CD4-positive, alpha-beta T cell (primary cell): ENCODE measurements at regions of chr14 and their contacts with region 1.

Region 1: DNA sequence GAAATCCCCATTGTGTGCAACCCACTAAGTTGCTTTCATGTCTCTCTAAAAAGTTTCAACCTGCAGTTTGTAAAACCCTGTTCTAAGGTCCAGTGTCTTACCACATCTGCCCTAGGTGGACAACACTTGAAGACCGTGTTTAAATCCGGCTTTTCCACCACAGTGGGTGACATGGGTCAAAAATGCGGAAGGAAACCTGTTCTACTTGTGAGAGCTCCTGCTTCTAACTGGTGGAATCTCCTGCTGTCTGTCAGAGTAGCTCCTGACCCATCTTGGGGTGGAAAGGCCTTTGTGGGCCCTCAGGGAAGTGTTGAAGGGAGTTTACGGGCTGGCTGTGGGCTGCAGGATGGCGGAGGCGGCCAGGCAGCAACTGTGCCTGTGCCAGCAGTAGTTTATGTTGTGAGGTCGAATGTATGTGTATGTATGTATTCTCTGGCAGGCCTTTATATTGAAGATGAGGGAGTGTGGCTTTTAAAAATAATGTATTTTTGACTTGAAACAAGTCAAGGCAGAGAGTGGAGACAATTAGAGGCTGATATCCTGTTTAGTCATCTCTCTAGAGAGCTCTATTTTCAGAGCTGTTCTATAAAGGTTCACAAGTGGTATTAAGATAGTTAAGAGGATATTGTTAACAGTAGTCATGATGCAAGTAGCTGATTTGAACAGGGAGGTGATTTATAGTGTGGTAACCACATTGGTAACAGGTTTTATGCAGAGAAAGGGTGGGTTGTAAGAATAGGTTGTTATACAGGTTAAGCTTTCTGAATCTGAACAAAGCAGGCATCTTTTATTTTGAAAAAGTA is 67.0 kb downstream of the PRKCH start:
- DNase-seq: peak in 4 of 14 experiments; percentile 26 to 78 (median 62)
- ATAC-seq: peak; percentile 77
- H3K4me3 ChIP-seq: peak overlapping the region; percentile 25
- H3K4me3 Mint-ChIP-seq: no peak overlapping the region
- H3K27ac ChIP-seq: peak overlapping the region; percentile 72
- H3K27ac Mint-ChIP-seq: no peak overlapping the region
- H3K4me1 ChIP-seq: peaks cover 72% of the 10 kb centered on the region
- H3K4me1 Mint-ChIP-seq: peaks cover 39% of the 10 kb centered on the region
- H3K27me3 ChIP-seq: no peaks in the 10 kb centered on the region
- H3K27me3 Mint-ChIP-seq: no peaks in the 10 kb centered on the region
- CTCF ChIP-seq: no peak

Region 2: GRCh38 chr14:61103481-61104339 is 284.7 kb before region 1 on chr14:
- CTCF ChIA-PET with region 1: no interaction called
- POLR2A ChIA-PET with region 1: no interaction called
- intact Hi-C with region 1: no loop called
- DNase-seq: peak in 3 of 14 experiments; percentile 11 to 66 (median 60)
- ATAC-seq: no peak
- H3K4me3 ChIP-seq: no peak overlapping the region
- H3K4me3 Mint-ChIP-seq: no peak overlapping the region
- H3K27ac ChIP-seq: no peak overlapping the region
- H3K27ac Mint-ChIP-seq: no peak overlapping the region
- H3K4me1 ChIP-seq: peaks cover 4% of the 10 kb centered on the region
- H3K4me1 Mint-ChIP-seq: no peaks in the 10 kb centered on the region
- H3K27me3 ChIP-seq: no peaks in the 10 kb centered on the region
- H3K27me3 Mint-ChIP-seq: no peaks in the 10 kb centered on the region
- CTCF ChIP-seq: no peak

Region 3: GRCh38 chr14:61326847-61327246 is 61.5 kb before region 1 on chr14:
- CTCF ChIA-PET with region 1: interaction called, 6 read pairs
- POLR2A ChIA-PET with region 1: interaction called, 40 read pairs
- intact Hi-C with region 1: loop called (anchors 1 to 5 kb)
- DNase-seq: peak in 3 of 14 experiments; percentile 28 to 53 (median 41)
- ATAC-seq: no peak
- H3K4me3 ChIP-seq: peak overlapping the region; percentile 95
- H3K4me3 Mint-ChIP-seq: peak overlapping the region; percentile 96
- H3K27ac ChIP-seq: peak overlapping the region; percentile 54 to 75
- H3K27ac Mint-ChIP-seq: no peak overlapping the region
- H3K4me1 ChIP-seq: peaks cover 46% of the 10 kb centered on the region
- H3K4me1 Mint-ChIP-seq: peaks cover 68% of the 10 kb centered on the region
- H3K27me3 ChIP-seq: no peaks in the 10 kb centered on the region
- H3K27me3 Mint-ChIP-seq: no peaks in the 10 kb centered on the region
- CTCF ChIP-seq: no peak

Region 4: DNA sequence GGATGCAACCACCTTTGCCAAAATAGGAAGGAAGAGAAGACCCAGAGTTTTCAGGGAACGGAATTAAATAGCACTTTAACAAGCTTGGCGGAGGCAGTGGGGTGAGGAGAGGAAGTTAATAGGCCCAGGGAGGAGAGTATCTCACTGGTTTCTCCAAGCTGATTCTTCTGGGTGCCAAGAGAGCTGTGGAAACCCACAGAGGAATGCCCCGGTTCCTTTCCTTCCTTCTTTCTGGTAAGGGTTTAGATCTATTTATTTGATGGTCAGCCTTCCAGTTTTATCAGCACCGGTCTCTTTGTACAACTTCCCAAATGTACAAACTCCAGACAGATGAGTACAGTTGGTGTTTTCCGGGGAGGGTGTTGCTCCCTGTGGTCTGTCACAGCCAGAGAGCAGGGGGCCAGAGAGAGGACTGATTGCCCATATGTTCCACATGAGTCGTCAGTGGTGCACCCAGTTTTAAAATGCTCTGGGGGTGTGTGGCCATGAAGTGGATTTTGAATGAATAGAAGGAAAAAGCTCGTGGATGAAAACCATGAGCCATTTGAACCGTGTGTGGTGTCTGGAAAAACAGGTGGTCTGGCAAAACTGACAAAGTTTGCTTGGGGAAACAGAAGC is 40.4 kb before region 1 on chr14:
- CTCF ChIA-PET with region 1: interaction called, 4 read pairs
- POLR2A ChIA-PET with region 1: interaction called, 10 read pairs
- intact Hi-C with region 1: no loop called
- DNase-seq: peak in 2 of 14 experiments; percentile 45 to 52
- ATAC-seq: no peak
- H3K4me3 ChIP-seq: peak overlapping the region; percentile 44
- H3K4me3 Mint-ChIP-seq: peak overlapping the region; percentile 83
- H3K27ac ChIP-seq: peak overlapping the region; percentile 67 to 88
- H3K27ac Mint-ChIP-seq: peak overlapping the region; percentile 99
- H3K4me1 ChIP-seq: peaks cover 87% of the 10 kb centered on the region
- H3K4me1 Mint-ChIP-seq: peaks cover 97% of the 10 kb centered on the region
- H3K27me3 ChIP-seq: no peaks in the 10 kb centered on the region
- H3K27me3 Mint-ChIP-seq: no peaks in the 10 kb centered on the region
- CTCF ChIP-seq: no peak

Region 5: DNA sequence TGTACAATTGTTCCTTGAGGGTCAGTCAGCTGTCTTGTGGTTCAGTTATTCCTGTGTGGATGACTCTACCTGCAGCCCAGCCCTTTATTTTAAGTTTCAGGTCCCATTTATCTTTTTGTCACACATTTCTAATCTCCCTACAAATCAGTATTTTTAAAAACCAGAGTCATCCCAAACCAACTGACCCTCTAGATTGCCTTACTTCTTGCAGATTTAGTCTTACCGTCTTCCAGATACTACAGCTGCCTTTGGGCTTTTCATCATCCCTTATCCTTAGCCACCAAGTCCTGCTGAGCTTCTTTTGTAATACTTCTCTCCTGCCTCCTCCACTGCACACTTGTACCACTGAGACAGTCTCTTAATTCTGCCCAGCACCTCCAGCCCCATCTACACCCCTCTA is 12.1 kb before region 1 on chr14:
- CTCF ChIA-PET with region 1: interaction called, 9 read pairs
- POLR2A ChIA-PET with region 1: interaction called, 11 read pairs
- intact Hi-C with region 1: loop called in 1 of 2 experiments (anchors 1 kb)
- DNase-seq: no peak
- ATAC-seq: no peak
- H3K4me3 ChIP-seq: no peak overlapping the region
- H3K4me3 Mint-ChIP-seq: peak overlapping the region; percentile 21
- H3K27ac ChIP-seq: no peak overlapping the region
- H3K27ac Mint-ChIP-seq: no peak overlapping the region
- H3K4me1 ChIP-seq: peaks cover 61% of the 10 kb centered on the region
- H3K4me1 Mint-ChIP-seq: peaks cover 21% of the 10 kb centered on the region
- H3K27me3 ChIP-seq: no peaks in the 10 kb centered on the region
- H3K27me3 Mint-ChIP-seq: no peaks in the 10 kb centered on the region
- CTCF ChIP-seq: no peak

Region 6: GRCh38 chr14:61438860-61439684 is 50.7 kb after region 1 on chr14:
- CTCF ChIA-PET with region 1: no interaction called
- POLR2A ChIA-PET with region 1: interaction called, 3 read pairs
- intact Hi-C with region 1: loop called in 1 of 2 experiments (anchors 10 kb)
- DNase-seq: peak in 8 of 14 experiments; percentile 16 to 76 (median 54)
- ATAC-seq: peak; percentile 65
- H3K4me3 ChIP-seq: peak overlapping the region; percentile 19
- H3K4me3 Mint-ChIP-seq: peak overlapping the region; percentile 72
- H3K27ac ChIP-seq: peak overlapping the region; percentile 45 to 53
- H3K27ac Mint-ChIP-seq: peak overlapping the region; percentile 83
- H3K4me1 ChIP-seq: peaks cover 78% of the 10 kb centered on the region
- H3K4me1 Mint-ChIP-seq: peaks cover 91% of the 10 kb centered on the region
- H3K27me3 ChIP-seq: no peaks in the 10 kb centered on the region
- H3K27me3 Mint-ChIP-seq: no peaks in the 10 kb centered on the region
- CTCF ChIP-seq: no peak

Region 7: DNA sequence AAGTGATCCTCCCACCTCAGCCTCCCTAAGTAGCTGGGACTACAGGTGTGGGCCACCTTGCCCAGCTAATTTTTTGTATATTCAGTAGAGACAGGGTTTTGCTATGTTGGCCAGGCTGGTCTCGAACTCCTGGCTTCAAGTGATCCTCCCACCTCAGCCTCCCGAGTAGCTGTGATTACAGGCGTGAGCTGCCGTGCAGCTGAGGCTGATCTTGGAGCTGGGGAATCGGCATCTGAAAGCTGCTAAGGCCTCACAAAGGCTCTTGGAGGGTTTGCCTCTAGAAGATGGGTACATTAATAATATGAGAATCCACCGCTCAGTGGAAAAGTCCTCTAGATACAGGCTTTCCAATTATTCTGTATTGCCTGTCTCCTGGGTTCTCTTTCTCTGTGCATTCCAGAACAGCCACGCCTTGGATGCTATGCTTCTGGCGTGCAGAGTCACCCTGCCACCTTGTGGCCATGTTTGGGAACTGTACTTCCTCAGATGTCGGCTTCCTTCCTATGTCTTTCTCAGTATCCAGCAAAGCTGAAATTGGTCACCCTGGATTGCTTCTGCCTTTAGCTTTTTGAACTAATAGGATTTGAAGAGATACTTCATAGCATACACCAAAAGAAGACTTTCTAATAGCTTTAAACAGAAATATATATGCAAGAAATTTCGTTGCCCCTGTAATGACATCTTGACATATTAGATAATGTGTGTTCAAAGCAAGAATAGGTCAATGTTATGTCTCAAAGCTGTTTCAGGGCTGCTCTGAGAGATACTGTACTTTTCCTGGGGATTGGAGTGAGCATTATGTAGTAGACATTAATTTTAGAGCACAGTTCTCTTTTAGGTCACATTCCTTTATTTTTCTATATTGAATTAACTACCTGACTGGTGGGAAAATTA is 449.2 kb after region 1 on chr14:
- CTCF ChIA-PET with region 1: no interaction called
- POLR2A ChIA-PET with region 1: no interaction called
- intact Hi-C with region 1: loop called in 1 of 2 experiments (anchors 10 kb)
- DNase-seq: peak; percentile 54 to 88 (median 68)
- ATAC-seq: peak; percentile 99
- H3K4me3 ChIP-seq: no peak overlapping the region
- H3K4me3 Mint-ChIP-seq: no peak overlapping the region
- H3K27ac ChIP-seq: no peak overlapping the region
- H3K27ac Mint-ChIP-seq: no peak overlapping the region
- H3K4me1 ChIP-seq: no peaks in the 10 kb centered on the region
- H3K4me1 Mint-ChIP-seq: no peaks in the 10 kb centered on the region
- H3K27me3 ChIP-seq: no peaks in the 10 kb centered on the region
- H3K27me3 Mint-ChIP-seq: peaks cover 6% of the 10 kb centered on the region
- CTCF ChIP-seq: peak; percentile 96